ENCODE measurements at regions of chr19 and their contacts with region 1.

Region 1: GRCh38 chr19:35066691-35067563 is 25.4 kb downstream of the HPN start:
- DNase-seq: peak; percentile 72
- H3K4me3 ChIP-seq: no peak overlapping the region
- H3K27ac ChIP-seq: no peak overlapping the region
- H3K4me1 ChIP-seq: no peaks in the 10 kb centered on the region
- H3K27me3 ChIP-seq: no peaks in the 10 kb centered on the region
- CTCF ChIP-seq: peak; percentile 89 to 90
- POLR2A ChIP-seq: no peak

Region 2: GRCh38 chr19:35055715-35056179 is 11.2 kb before region 1 on chr19:
- CTCF ChIA-PET with region 1: interaction called, 11 read pairs
- POLR2A ChIA-PET with region 1: interaction called, 4 read pairs
- dilution Hi-C with region 1: no loop called
- intact Hi-C with region 1: no loop called
- DNase-seq: no peak
- H3K4me3 ChIP-seq: no peak overlapping the region
- H3K27ac ChIP-seq: no peak overlapping the region
- H3K4me1 ChIP-seq: no peaks in the 10 kb centered on the region
- H3K27me3 ChIP-seq: peaks cover 0 to 3% of the 10 kb centered on the region in 2 experiments
- CTCF ChIP-seq: no peak
- POLR2A ChIP-seq: no peak

Region 3: GRCh38 chr19:35090506-35091237 is 23.7 kb after region 1 on chr19:
- CTCF ChIA-PET with region 1: interaction called, 25 read pairs
- POLR2A ChIA-PET with region 1: no interaction called
- dilution Hi-C with region 1: no loop called
- intact Hi-C with region 1: loop called (anchors 1 kb)
- DNase-seq: peak; percentile 57
- H3K4me3 ChIP-seq: no peak overlapping the region
- H3K27ac ChIP-seq: no peak overlapping the region
- H3K4me1 ChIP-seq: no peaks in the 10 kb centered on the region
- H3K27me3 ChIP-seq: peaks cover 1 to 2% of the 10 kb centered on the region in 2 experiments
- CTCF ChIP-seq: peak; percentile 41 to 66
- POLR2A ChIP-seq: no peak

Region 4: DNA sequence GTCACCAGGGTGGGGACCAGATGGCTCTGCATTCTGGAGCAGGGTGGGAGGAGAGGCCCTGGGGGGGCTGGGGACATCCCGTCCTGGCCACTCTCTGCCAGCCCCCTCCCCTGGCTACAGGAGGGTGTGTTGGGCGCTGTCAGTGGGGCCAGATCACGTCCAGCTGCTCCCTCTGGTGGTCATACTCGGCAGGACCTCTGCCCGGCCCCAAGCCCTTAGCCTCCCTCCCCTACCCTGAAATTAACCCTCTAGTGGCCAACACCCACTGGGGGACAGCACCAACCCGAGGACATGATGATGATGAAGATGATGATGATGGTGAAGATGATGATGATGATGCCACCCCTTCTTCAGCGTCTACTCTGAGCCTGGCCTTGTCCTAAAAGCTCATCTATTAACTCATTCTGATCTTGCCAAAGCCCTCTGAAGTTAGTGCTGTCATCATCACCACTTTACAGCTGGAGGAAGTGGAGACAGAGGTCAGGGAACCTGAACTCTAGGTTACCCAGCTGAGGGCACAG is 68.5 kb after region 1 on chr19:
- CTCF ChIA-PET with region 1: interaction called, 52 read pairs
- POLR2A ChIA-PET with region 1: no interaction called
- dilution Hi-C with region 1: no loop called
- intact Hi-C with region 1: loop called (anchors 1 kb)
- DNase-seq: peak; percentile 67
- H3K4me3 ChIP-seq: no peak overlapping the region
- H3K27ac ChIP-seq: no peak overlapping the region
- H3K4me1 ChIP-seq: no peaks in the 10 kb centered on the region
- H3K27me3 ChIP-seq: no peaks in the 10 kb centered on the region
- CTCF ChIP-seq: peak; percentile 82 to 92
- POLR2A ChIP-seq: no peak

Region 5: GRCh38 chr19:35140962-35141637 is 74.2 kb after region 1 on chr19:
- CTCF ChIA-PET with region 1: interaction called, 52 read pairs
- POLR2A ChIA-PET with region 1: no interaction called
- dilution Hi-C with region 1: no loop called
- intact Hi-C with region 1: no loop called
- DNase-seq: peak; percentile 79
- H3K4me3 ChIP-seq: no peak overlapping the region
- H3K27ac ChIP-seq: no peak overlapping the region
- H3K4me1 ChIP-seq: peaks cover 11% of the 10 kb centered on the region
- H3K27me3 ChIP-seq: peaks cover 16 to 17% of the 10 kb centered on the region in 2 experiments
- CTCF ChIP-seq: peak; percentile 5 to 63
- POLR2A ChIP-seq: no peak

Region 6: GRCh38 chr19:35213663-35214632 is 147.0 kb after region 1 on chr19:
- CTCF ChIA-PET with region 1: interaction called, 3 read pairs
- POLR2A ChIA-PET with region 1: no interaction called
- dilution Hi-C with region 1: no loop called
- intact Hi-C with region 1: loop called (anchors 1 kb)
- DNase-seq: peak; percentile 96
- H3K4me3 ChIP-seq: no peak overlapping the region
- H3K27ac ChIP-seq: no peak overlapping the region
- H3K4me1 ChIP-seq: peaks cover 16% of the 10 kb centered on the region
- H3K27me3 ChIP-seq: peaks cover 2 to 4% of the 10 kb centered on the region in 2 experiments
- CTCF ChIP-seq: no peak
- POLR2A ChIP-seq: no peak

Region 7: DNA sequence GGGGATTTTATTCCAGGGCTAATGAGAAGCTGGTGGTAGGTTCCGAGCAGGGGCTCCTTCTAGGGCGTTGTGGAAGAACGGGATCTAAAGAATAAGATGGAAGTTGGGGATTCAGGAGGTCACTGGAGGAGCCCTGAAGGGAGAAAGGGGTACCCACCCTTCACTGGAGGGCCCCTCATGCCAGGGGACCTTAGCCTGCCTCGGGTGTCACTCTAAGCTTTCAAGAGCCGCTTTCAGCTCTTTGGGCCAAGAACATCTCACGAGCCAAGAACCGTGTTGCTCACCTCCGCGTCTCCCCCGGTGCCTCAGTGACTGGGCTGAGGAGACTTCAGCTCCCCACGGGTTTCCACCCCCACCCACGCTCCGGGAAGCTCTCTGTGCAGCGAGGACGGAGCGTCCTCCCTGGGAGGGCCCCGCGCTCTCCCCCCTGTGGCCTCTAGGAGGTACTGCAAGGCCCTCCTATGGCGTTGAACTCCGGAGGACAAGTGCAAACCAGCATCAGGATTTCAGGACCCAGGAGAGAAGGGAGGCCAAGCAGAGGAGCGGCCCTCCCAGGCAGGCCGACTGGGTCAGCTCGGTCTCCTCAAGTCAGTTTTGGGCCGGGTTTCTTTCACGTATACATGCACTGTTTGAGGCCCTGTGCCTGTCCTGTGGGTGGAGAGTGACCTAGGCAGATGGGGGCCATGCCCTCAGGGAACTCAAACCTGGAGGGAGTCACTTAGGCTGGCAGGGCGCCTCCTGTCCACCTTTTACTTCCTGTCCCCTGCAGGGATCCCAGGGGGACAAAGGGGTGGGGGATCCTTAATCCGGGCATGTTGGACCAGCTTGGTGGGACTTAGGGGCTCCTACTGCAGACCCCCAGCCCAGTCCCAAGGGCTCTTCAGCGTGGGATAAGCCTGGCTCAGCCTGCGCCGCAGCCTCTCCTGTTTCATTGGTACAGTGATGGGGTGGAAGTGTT is 428.5 kb after region 1 on chr19:
- CTCF ChIA-PET with region 1: interaction called, 7 read pairs
- POLR2A ChIA-PET with region 1: no interaction called
- dilution Hi-C with region 1: no loop called
- intact Hi-C with region 1: loop called (anchors 1 kb)
- DNase-seq: peak; percentile 44
- H3K4me3 ChIP-seq: no peak overlapping the region
- H3K27ac ChIP-seq: no peak overlapping the region
- H3K4me1 ChIP-seq: no peaks in the 10 kb centered on the region
- H3K27me3 ChIP-seq: no peaks in the 10 kb centered on the region
- CTCF ChIP-seq: peak; percentile 82 to 98
- POLR2A ChIP-seq: no peak

Measured in endothelial cell of umbilical vein (primary cell).